Activated CD4-positive, alpha-beta T cell treated with anti-CD3 and anti-CD28 coated beads for 36 hours (primary cell): ENCODE measurements at regions of chr12 and their contacts with region 1.

Region 1: GRCh38 chr12:50025187-50026059 is at the start of gene RACGAP1:
- DNase-seq: peak; percentile 97
- ATAC-seq: peak; percentile 98
- H3K4me3 Mint-ChIP-seq: peak within 1 kb of the TSS; percentile 90
- H3K27ac Mint-ChIP-seq: peak within 1 kb of the TSS; percentile 95
- H3K4me1 Mint-ChIP-seq: peaks cover 23% of the 10 kb centered on the region
- H3K27me3 Mint-ChIP-seq: no peaks in the 10 kb centered on the region
- total RNA-seq, gene RACGAP1: 99.7 to 118 TPM

Region 2: DNA sequence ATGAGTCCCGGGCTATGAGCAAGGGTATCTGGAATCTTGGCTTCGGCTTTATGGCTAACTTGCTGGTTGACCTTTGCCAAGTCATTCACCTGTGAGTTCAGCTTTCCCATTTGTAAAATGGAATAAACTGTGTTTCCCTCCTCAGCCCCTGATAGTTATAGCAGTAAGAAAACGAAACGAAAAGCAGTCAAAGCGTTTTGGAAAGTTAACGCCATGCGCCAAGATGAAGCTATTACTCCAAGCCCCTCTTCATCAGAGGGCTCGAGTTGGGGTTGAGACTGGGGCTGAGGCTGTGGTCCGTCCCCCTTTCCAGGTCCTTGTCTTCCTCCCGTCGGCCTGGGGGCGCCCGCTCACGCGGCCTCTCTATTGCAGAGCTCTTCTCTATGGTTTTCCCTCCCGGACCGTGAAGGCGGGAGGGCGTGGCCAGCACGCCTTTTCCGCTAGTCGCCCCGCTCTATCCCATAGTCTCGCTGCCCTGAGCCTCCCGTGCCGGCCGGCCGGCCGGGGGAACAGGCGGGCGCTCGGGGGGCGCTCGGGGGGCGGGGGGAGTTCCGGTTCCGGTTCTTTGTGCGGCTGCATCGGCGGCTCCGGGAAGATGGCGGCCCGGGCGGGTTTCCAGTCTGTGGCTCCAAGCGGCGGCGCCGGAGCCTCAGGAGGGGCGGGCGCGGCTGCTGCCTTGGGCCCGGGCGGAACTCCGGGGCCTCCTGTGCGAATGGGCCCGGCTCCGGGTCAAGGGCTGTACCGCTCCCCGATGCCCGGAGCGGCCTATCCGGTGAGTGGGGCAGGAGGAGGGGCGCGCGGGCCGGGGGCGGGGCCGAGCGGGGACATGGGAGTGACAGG is 59.6 kb after region 1 on chr12 and contains the start of gene SMARCD1:
- CTCF ChIA-PET with region 1: interaction called, 5 read pairs
- POLR2A ChIA-PET with region 1: interaction called, 16 read pairs
- intact Hi-C with region 1: loop called in 1 of 2 experiments (anchors 1 kb)
- DNase-seq: peak; percentile 91
- ATAC-seq: peak; percentile 90
- H3K4me3 Mint-ChIP-seq: peak within 1 kb of the TSS; percentile 85
- H3K27ac Mint-ChIP-seq: peak within 1 kb of the TSS; percentile 96
- H3K4me1 Mint-ChIP-seq: peaks cover 36% of the 10 kb centered on the region
- H3K27me3 Mint-ChIP-seq: no peaks in the 10 kb centered on the region
- total RNA-seq, gene SMARCD1: 51.8 to 76.6 TPM